Vagina (tissue), 2 donors: ENCODE measurements at regions of chr2 and their contacts with region 1.

Region 1: GRCh38 chr2:96907115-96908041 is 37.5 kb upstream of the SEMA4C start:
- DNase-seq: no peak
- H3K4me3 ChIP-seq: peak overlapping the region; percentile 26 to 32
- H3K27ac ChIP-seq: peak overlapping the region; percentile 94
- H3K4me1 ChIP-seq: peaks cover 31% of the 10 kb centered on the region
- H3K27me3 ChIP-seq: no peaks in the 10 kb centered on the region
- CTCF ChIP-seq: no peak
- POLR2A ChIP-seq: peak in 1 of 2 donors; percentile 29

Region 2: DNA sequence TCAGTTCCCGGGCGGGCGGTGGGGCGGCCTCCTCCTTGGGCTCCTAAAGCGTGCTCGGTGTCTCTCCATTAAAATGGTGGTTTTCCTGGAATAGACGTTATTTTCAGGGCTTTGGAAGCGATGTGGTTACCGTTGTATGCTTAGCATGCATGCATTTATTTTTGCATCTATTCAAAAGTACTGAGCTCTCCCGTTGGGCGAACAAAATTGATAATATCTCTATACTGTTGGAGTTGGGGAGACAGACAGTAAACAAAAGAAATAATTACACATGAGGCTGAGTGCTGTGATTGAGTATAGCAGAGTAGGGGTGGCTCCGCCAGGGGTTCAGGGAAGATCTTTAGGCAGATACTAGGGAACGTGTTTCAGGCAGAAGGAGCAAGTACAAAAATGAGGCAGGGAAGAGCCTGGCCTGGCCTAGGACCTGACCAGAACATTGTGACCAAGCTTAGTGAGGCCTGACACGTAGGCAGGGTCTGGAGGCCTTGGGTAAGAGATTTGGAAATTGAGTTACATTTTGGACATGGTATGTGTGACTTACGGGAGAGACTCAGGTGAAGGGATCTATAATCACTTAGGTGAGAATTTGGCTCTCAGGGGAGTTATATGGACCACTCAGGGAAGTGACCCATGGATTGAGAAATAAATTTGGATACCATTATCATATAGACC is 571.1 kb before region 1 on chr2:
- intact Hi-C with region 1: loop called (anchors 5 kb)
- DNase-seq: no peak
- H3K4me3 ChIP-seq: peak overlapping the region; percentile 71 to 83
- H3K27ac ChIP-seq: peak overlapping the region; percentile 93
- H3K4me1 ChIP-seq: peaks cover 17% of the 10 kb centered on the region
- H3K27me3 ChIP-seq: no peaks in the 10 kb centered on the region
- CTCF ChIP-seq: no peak
- POLR2A ChIP-seq: no peak

Region 3: GRCh38 chr2:96856776-96857673 is 50.4 kb before region 1 on chr2:
- intact Hi-C with region 1: loop called (anchors 2 kb)
- DNase-seq: no peak
- H3K4me3 ChIP-seq: peak overlapping the region; percentile 63 to 87
- H3K27ac ChIP-seq: peak overlapping the region; percentile 79
- H3K4me1 ChIP-seq: peaks cover 49% of the 10 kb centered on the region
- H3K27me3 ChIP-seq: no peaks in the 10 kb centered on the region
- CTCF ChIP-seq: no peak
- POLR2A ChIP-seq: no peak

Region 4: GRCh38 chr2:96868555-96869280 is 38.7 kb before region 1 on chr2:
- intact Hi-C with region 1: loop called (anchors 2 kb)
- DNase-seq: no peak
- H3K4me3 ChIP-seq: peak overlapping the region; percentile 78 to 100
- H3K27ac ChIP-seq: peak overlapping the region; percentile 98
- H3K4me1 ChIP-seq: peaks cover 56% of the 10 kb centered on the region
- H3K27me3 ChIP-seq: no peaks in the 10 kb centered on the region
- CTCF ChIP-seq: peak in 2 of 3 experiments; percentile 11 to 45
- POLR2A ChIP-seq: peak in 1 of 2 donors; percentile 12

Region 5: GRCh38 chr2:96951093-96951654 is 43.8 kb after region 1 on chr2:
- intact Hi-C with region 1: loop called (anchors 5 kb)
- DNase-seq: no peak
- H3K4me3 ChIP-seq: no peak overlapping the region
- H3K27ac ChIP-seq: peak overlapping the region; percentile 79
- H3K4me1 ChIP-seq: peaks cover 44% of the 10 kb centered on the region
- H3K27me3 ChIP-seq: no peaks in the 10 kb centered on the region
- CTCF ChIP-seq: peak; percentile 73 to 95 (median 87)
- POLR2A ChIP-seq: no peak

Region 6: GRCh38 chr2:96985181-96985945 is 78.0 kb after region 1 on chr2:
- intact Hi-C with region 1: no loop called
- DNase-seq: no peak
- H3K4me3 ChIP-seq: no peak overlapping the region
- H3K27ac ChIP-seq: no peak overlapping the region
- H3K4me1 ChIP-seq: no peaks in the 10 kb centered on the region
- H3K27me3 ChIP-seq: no peaks in the 10 kb centered on the region
- CTCF ChIP-seq: no peak
- POLR2A ChIP-seq: no peak